Left cardiac atrium (tissue), 4 donors: ENCODE measurements at regions of chr21 and their contacts with region 1.

Region 1: DNA sequence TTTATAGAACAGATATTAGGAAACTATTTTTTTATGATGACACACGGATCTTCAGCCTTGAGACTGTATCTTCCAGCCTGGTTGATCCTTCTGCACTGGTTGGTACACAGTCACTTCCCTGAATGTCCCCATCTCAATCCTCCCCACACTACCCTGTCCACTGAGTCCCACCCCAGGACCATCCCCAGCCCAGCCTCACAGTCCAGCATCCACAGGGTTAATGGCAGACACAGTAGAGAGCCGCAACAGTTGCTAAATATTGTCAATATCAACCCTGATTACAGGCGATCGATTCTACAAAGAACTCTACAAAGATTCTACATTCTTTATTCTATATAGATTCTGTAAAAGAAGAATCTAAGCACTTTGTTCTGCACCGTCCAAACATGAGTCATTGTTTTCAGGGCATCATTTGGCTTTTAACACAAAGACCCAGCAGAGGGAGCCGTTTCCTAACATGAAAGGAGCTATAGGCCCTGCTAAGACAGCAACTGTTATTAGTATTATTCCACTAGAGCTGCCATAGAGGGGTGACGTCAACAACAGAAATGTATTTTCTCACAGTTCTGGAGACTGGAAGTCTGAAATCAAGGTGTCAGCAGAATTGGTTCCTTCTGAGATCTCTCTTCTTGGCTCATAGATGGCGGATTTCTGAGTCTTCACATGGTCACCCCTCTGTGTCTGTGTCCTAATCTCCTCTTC is 30.1 kb upstream of the IFNAR2 start:
- DNase-seq: peak; percentile 80
- ATAC-seq: peak; percentile 68 to 75

Region 2: GRCh38 chr21:32834916-32835235 is 364.8 kb before region 1 on chr21:
- intact Hi-C with region 1: loop called in 1 of 2 experiments (anchors 5 kb)
- DNase-seq: no peak
- ATAC-seq: no peak

Region 3: DNA sequence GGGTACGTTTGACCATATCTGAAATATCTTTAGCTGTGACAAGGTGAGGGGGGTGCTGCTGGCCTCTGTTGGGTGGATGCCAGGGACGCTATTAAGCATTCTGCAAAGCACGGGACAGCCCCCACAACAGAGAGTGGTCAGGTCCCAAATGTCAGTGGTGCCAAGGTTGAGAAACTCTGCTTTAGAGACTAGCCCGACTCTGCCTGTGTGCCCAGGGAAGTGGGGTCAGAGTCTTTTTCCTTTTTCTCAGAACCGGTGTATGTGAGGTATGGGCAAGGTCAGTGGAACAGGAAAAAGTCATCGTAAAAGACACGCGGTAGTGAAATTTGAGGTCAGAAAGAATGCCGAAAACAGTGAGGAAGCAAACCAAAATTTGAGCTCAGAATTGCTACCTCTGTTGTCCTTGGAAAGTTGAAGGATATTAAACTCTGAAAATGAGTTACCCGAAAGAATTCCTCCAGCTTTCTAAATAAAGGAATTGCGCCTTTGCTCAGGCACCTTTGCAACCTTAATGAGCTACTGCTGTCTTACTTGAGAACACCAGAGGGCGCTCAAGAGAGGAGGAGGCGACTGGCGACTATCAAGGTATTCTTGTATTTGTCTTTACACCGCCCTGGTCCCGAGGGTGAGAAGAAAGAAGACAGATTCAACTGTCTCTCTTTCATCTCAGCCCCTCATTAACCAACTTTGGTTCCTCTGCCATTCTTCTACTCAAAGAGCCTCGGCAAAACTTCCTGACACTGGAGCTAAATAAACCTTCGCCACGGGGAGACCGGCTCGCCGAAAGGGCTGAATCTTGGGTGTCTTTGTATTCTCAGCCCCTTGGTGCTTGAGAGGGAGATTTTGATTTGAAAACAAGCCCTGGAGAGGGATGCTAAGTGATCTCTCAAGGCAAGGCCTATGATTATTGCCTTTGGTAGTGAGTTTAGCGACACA is 259.3 kb before region 1 on chr21:
- intact Hi-C with region 1: loop called (anchors 2 to 10 kb)
- DNase-seq: peak; percentile 26
- ATAC-seq: peak; percentile 59 to 70

Region 4: GRCh38 chr21:33374450-33375096 is 174.9 kb after region 1 on chr21:
- intact Hi-C with region 1: loop called (anchors 5 kb)
- DNase-seq: peak; percentile 58
- ATAC-seq: peak; percentile 81 to 90

Region 5: DNA sequence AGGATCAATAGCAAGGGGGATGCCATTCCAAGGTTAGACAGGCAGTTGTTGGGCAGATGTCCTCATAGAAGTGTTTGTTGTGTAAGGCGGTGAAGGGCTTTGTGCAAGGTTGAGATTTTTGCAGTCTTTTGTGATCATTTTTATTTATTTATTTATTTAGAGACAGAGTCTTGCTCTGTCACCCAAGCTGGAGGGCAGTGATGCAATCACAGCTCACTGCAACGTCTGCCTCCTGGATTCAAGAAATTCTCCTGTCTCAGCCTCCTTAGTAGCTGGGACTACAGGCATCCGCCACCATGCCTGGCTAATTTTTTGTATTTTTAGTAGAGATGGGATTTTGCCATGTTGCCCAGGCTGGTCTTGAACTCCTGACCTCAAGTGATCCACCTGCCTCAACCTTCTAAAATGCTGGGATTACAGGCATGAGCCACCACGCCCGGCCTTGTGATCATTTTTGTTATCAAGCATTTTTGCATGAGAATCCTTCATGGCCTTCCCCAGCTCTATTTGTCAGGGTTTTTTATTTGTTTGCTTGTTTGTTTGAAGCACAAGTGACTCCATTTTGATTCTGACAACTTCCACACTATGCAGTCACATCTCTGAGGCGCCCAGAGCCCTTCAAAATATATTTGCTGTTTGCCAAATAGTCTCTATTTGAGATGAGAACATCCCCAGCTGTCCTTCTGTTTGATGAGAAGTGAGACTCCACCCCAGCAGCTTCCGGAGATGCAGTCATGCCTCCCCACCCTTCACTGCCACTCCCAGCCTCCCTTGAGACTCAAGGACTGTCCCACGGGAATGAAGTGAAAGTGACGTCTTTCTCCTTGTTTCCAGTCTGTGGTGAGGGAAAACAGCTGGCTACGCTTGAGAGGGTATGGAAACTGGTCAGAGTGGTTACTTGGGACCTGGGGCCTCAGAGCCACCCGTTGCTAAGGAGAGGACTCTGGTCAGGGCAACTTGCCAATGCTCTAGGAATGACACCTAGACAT is 242.1 kb after region 1 on chr21:
- intact Hi-C with region 1: loop called (anchors 2 to 10 kb)
- DNase-seq: peak; percentile 58
- ATAC-seq: peak; percentile 33 to 61